ENCODE measurements at regions of chr17 and their contacts with region 1.

Region 1: GRCh38 chr17:38674749-38675615 is at the start of gene EPOP:
- DNase-seq: peak; percentile 91
- ATAC-seq: peak; percentile 93 to 95
- H3K4me3 ChIP-seq: peak within 1 kb of the TSS; percentile 61
- H3K27ac ChIP-seq: peak within 1 kb of the TSS; percentile 25
- H3K4me1 ChIP-seq: peaks cover 31% of the 10 kb centered on the region
- H3K27me3 ChIP-seq: peaks cover 46% of the 10 kb centered on the region
- CTCF ChIP-seq: no peak
- total RNA-seq, gene EPOP: 1.0 TPM

Region 2: DNA sequence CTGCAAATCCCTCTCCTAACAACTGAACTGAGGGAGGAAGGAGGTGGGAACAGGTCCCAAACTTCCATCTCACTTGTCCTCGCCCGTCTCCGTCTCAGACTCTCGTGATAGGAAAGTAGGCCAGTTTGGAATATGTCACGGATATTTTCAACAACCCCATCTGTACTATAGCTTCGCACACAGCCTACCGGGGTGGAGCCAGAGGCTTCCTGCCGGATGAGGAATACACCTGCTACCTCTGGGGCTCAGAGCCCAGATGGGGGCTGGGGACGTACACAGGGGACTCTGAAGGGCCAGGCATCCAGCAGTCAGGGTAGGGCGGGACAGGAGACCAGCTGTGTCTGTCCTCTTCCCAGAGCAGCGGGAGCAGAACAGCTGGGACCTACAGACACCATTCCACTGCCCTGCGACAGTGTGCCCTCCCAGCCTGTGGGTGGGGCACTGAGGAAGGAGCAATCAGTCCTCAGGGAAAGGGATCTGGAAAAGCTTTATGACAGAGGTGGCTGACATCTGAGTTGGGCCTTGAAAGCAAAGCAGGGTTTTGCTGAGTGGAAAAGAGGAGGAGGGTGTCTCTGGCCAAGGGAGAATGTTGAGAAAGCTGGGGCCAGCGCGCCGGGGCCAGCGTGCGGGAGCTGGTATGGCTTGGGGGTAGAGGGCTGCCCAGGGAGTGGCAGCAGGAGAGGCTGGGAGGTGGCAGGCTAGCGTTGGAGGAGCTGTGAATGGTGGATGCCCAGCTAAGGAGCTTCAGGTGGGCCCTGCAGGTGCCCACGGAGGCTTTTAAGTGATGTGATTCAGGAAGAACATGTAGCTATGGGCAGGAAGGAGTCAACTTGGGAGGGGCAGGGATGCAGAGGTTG is 57.7 kb before region 1 on chr17:
- intact Hi-C with region 1: no loop called
- DNase-seq: no peak
- ATAC-seq: peak in 1 of 2 donors; percentile 34
- H3K4me3 ChIP-seq: no peak overlapping the region
- H3K27ac ChIP-seq: no peak overlapping the region
- H3K4me1 ChIP-seq: no peaks in the 10 kb centered on the region
- H3K27me3 ChIP-seq: peaks cover 21% of the 10 kb centered on the region
- CTCF ChIP-seq: no peak

Region 3: DNA sequence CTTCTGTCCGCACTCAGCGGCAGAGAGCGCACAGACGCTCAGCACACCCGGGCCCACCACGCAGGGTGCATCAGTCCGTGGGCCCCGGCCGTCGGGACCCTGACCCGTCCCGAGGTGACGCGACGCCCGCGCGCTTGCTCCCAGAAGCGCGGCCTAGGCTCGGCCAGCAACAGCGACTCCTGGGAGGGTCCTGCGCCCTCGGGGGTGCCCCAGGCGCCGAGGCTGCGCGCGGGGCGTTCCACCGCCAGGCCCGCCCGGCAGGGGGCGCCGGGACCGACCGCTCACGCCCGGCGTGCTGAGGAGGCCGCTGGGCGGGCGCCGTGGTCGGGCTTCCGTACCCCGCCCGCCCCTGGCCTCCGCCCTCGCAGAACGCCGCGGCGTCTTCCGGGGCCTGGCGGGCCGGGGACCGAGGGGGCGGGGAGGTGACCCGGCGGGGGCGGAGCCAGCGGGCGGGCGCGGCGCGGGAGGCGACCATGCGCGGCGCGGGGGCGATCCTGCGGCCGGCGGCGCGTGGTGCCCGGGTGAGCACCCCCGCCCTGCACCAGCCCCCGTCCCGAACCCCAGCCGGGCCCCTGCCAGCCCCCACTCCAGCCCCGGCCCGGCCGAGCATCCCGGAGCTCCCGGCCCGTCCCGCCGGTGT is 55.0 kb after region 1 on chr17 and contains the start of gene CISD3:
- intact Hi-C with region 1: loop called (anchors 10 kb)
- DNase-seq: peak; percentile 92
- ATAC-seq: peak; percentile 93
- H3K4me3 ChIP-seq: peak within 1 kb of the TSS; percentile 66
- H3K27ac ChIP-seq: peak within 1 kb of the TSS; percentile 86
- H3K4me1 ChIP-seq: peaks cover 45% of the 10 kb centered on the region
- H3K27me3 ChIP-seq: no peaks in the 10 kb centered on the region
- CTCF ChIP-seq: peak; percentile 66
- total RNA-seq, gene CISD3: 31.3 TPM

Region 4: GRCh38 chr17:39376434-39376833 is 701.5 kb after region 1 on chr17:
- intact Hi-C with region 1: no loop called
- DNase-seq: no peak
- ATAC-seq: no peak
- H3K4me3 ChIP-seq: no peak overlapping the region
- H3K27ac ChIP-seq: no peak overlapping the region
- H3K4me1 ChIP-seq: peaks cover 18% of the 10 kb centered on the region
- H3K27me3 ChIP-seq: no peaks in the 10 kb centered on the region
- CTCF ChIP-seq: no peak